Natural killer cell (primary cell): ENCODE measurements at regions of chr19 and their contacts with region 1.

Region 1: DNA sequence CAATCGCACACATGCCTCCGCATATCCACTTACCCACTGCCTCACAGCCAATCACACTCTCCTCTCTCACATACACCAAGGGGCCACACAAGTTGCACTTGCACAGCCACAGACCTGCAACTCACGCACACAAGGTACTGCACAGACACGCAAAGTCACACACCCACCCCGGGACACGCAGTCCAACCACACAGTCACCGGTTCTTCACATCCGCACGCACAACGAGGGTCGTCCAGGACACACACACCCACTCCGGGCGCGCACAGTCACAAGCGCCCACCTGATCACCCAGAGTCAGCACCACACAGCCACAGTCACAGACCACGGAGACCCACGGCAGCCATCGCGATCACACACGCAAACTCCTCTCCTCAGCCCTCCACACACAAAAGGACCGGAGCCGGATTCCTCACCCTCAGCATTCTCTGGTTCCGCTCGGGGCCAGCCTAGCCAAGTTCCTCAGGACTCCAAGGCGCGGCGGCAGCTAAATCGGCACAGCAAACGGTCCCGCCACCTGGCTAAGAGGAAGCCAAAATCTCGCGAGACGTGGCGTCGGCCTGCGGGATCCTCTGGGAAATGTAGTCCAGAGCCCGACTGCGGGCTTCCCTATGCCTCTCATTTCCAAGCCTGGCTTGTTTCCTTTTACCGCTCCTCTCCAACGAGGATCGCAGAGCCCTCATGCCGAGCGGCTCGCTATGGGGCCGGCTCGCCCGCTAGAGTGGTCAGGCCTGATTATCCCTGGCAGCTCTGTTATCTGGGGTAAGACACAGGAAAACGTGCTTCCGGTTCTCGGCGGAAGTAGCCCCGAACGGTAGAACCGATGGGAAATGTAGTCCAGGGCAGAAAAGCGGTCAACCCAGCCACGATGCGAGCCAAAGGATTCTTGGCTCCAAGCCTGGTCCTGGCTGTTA is at the start of gene ZNF850:
- DNase-seq: peak; percentile 91 to 97
- ATAC-seq: peak; percentile 90 to 93 (median 91)
- H3K4me3 ChIP-seq: peak within 1 kb of the TSS; percentile 67
- H3K4me3 Mint-ChIP-seq: peak within 1 kb of the TSS; percentile 100
- H3K27ac ChIP-seq: peak within 1 kb of the TSS; percentile 56
- H3K27ac Mint-ChIP-seq: peak within 1 kb of the TSS; percentile 95 to 97
- H3K4me1 ChIP-seq: peaks cover 19% of the 10 kb centered on the region
- H3K4me1 Mint-ChIP-seq: peaks cover 26 to 27% of the 10 kb centered on the region in 2 donors
- H3K27me3 ChIP-seq: no peaks in the 10 kb centered on the region
- H3K27me3 Mint-ChIP-seq: no peaks in the 10 kb centered on the region
- CTCF ChIP-seq: no peak
- total RNA-seq, gene ZNF850: 1.7 to 4.3 (median 4.2) TPM

Region 2: DNA sequence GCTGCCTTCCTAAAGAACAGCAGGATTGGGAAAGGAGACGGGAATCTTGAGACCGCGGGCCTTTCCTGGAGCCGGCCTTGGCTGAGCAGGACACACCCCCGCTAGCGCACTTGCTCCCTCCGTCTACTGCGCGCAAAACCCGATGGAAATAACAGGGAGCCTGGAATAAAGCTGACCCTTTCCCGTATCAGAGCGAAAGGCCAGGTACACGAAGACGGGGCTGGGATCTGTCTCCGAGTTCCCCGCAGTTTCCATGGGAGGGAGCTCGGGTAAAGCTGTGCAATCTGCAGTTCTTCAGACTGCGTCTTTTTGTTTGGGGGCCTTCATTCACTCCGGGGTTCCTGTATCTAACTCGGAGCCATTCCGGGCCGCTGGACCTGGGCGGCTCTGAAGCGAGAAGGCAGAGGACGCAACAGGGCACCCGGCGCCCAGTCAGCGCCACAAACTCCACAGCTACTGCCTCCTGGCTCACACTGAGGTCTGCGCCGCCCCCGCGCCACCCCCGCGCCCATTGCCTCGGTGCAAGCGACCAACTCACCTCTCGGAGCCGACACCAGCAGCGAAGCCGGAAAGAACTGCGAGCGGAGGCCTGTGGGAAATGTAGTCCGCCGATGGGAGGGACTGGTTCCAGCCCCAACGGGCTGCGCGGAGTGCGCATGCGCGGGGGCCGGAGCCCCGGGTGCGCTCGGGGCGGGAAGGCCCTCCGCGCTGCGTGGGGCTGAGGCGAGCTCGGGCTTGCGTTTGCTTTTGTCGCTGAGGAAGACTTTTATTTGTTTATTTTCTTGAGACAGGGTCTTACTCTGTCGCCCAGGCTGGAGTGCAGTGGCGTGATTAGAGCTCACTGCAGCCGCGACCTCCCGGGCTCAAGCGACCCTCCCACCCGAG is 393.7 kb before region 1 on chr19 and contains the start of gene ZFP14:
- intact Hi-C with region 1: loop called (anchors 2 kb)
- DNase-seq: peak; percentile 91 to 97
- ATAC-seq: peak; percentile 98
- H3K4me3 ChIP-seq: peak within 1 kb of the TSS; percentile 81
- H3K4me3 Mint-ChIP-seq: peak within 1 kb of the TSS; percentile 88
- H3K27ac ChIP-seq: peak within 1 kb of the TSS; percentile 89
- H3K27ac Mint-ChIP-seq: peak within 1 kb of the TSS; percentile 89 to 98
- H3K4me1 ChIP-seq: peaks cover 10% of the 10 kb centered on the region
- H3K4me1 Mint-ChIP-seq: peaks cover 18 to 23% of the 10 kb centered on the region in 2 donors
- H3K27me3 ChIP-seq: no peaks in the 10 kb centered on the region
- H3K27me3 Mint-ChIP-seq: no peaks in the 10 kb centered on the region
- CTCF ChIP-seq: no peak
- total RNA-seq, gene ZFP14: 7.4 to 8.2 (median 7.8) TPM

Region 3: DNA sequence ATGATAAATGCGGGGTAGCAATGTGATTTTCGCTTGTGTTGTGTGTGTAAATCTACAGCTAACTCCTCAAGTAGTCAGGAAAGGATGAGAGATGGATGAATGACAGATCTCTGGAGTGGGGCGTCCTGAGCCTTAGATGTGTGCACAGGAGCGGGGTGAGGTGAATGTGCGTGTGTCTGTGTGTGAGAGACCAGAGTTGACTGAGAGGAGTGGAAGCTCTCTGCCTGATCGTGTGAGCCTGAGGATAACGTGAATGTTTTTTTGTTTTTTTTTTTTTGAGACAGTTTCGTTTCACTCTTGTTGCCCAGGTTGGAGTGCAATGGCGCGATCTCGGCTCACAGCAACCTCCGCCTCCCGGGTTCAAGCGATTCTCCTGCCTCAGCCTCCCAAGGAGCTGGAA is 106.7 kb before region 1 on chr19:
- intact Hi-C with region 1: loop called (anchors 2 kb)
- DNase-seq: peak in 1 of 2 donors; percentile 10
- ATAC-seq: no peak
- H3K4me3 ChIP-seq: peak overlapping the region; percentile 80
- H3K4me3 Mint-ChIP-seq: peak overlapping the region; percentile 100
- H3K27ac ChIP-seq: no peak overlapping the region
- H3K27ac Mint-ChIP-seq: peak overlapping the region; percentile 98
- H3K4me1 ChIP-seq: peaks cover 20% of the 10 kb centered on the region
- H3K4me1 Mint-ChIP-seq: peaks cover 34 to 40% of the 10 kb centered on the region in 2 donors
- H3K27me3 ChIP-seq: no peaks in the 10 kb centered on the region
- H3K27me3 Mint-ChIP-seq: no peaks in the 10 kb centered on the region
- CTCF ChIP-seq: no peak

Region 4: DNA sequence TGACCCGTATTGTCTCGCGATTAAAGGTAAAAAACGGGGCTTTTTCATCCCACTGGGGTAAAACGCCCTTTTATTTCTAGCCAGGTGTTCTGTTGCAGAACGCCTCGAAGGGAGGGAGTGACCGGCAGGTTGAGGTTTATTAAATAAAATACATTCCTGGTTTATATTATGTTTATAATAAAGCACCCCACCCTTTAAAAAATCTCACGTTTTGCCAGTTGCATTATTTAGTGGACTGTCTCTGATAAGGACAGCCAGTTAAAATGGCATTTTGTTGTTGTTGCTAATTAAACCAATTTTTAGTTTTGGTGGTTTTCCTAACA is 25.2 kb after region 1 on chr19:
- intact Hi-C with region 1: loop called (anchors 1 kb)
- DNase-seq: no peak
- ATAC-seq: no peak
- H3K4me3 ChIP-seq: peak overlapping the region; percentile 96
- H3K4me3 Mint-ChIP-seq: peak overlapping the region; percentile 99
- H3K27ac ChIP-seq: peak overlapping the region; percentile 90
- H3K27ac Mint-ChIP-seq: peak overlapping the region; percentile 95 to 99
- H3K4me1 ChIP-seq: peaks cover 17% of the 10 kb centered on the region
- H3K4me1 Mint-ChIP-seq: peaks cover 3 to 7% of the 10 kb centered on the region in 2 donors
- H3K27me3 ChIP-seq: no peaks in the 10 kb centered on the region
- H3K27me3 Mint-ChIP-seq: no peaks in the 10 kb centered on the region
- CTCF ChIP-seq: no peak

Region 5: DNA sequence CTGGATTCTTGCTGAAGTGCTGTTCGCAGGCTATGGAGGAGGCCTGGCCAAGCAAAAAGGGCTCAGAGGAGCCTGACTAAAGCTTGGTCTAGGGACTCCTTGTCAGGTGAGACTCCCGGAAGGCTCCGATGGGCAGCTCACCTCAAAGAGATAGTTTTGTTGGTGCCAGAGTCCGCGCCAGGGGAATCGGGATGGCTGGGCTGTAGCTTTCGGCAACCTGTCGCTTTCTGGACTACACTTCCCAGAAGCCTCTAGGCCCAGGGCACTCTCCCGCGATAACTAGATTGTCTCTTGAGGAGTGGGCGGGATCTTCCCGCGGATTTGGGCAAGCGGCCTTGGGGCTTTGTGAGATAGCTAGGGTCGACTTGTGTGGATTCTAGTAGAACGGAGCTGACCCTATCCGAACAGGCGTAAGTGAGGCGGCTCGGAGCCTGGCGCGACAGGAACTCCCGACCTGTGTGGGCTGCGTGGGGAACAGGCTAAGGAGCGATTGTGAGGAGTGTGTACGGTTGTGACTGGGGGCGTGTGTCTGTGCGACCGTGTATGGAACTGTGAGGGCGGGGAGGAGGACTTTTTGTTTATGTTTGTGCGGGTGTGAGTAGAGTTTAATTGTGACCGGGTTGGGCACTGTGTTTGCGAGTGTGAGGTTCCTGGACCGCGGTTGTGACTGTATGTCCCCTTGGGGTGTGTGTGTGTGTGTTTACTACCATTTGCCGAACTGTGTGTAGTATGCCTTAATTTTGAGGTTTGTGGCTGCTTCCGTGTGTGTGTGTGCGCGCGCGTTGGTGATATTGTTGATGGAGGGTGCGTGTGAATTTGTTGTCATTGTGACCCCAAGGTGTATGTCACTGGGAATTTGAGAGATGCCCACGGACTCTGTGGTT is 78.2 kb after region 1 on chr19 and contains the start of gene ZNF345:
- intact Hi-C with region 1: loop called (anchors 1 kb)
- DNase-seq: peak; percentile 73 to 94
- ATAC-seq: peak; percentile 79 to 94 (median 85)
- H3K4me3 ChIP-seq: peak within 1 kb of the TSS; percentile 62
- H3K4me3 Mint-ChIP-seq: no peak within 1 kb of the TSS
- H3K27ac ChIP-seq: peak within 1 kb of the TSS; percentile 85
- H3K27ac Mint-ChIP-seq: no peak within 1 kb of the TSS
- H3K4me1 ChIP-seq: peaks cover 23% of the 10 kb centered on the region
- H3K4me1 Mint-ChIP-seq: peaks cover 0 to 10% of the 10 kb centered on the region in 2 donors
- H3K27me3 ChIP-seq: no peaks in the 10 kb centered on the region
- H3K27me3 Mint-ChIP-seq: no peaks in the 10 kb centered on the region
- CTCF ChIP-seq: no peak
- total RNA-seq, gene ZNF345: 7.1 to 19.5 (median 10.0) TPM

Region 6: DNA sequence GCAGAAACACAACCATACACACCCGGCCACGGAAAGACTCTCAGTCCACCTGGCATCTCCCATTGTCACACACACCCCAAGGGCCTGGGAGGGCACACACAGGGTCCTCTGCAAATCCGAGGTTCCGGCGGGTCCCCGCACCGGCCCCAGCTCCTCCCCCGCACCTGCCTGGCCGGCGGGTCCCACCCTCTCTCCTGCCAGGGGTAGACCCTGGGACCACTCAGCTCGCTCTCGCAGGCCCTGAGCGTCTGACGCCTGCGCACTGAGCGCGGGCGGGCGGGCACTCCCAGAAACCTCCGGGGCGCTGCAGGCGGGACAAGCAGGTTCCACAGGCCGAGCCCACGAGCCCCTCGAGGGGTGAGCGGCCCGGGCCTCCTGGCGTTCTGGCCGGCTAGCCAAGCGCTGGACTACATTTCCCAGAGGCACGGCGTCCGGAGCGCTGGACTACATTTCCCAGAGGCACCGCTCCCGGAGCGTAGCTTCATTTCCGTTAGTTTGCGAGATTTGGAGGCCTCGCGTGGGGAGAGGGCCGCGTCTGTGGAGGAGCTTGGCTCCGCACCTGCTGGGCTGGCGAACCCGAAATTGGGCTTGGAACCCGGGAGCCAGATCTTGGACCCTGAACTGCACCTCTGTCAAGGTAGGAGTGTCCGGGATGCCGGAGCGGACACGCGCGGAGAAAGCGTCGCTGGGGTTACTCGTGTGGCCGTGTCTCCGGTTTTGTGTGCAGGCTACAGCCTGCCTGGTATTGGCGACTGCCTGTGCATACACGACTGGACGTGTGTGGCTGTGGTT is 305.6 kb after region 1 on chr19 and contains the start of gene ZNF420:
- intact Hi-C with region 1: loop called (anchors 2 kb)
- DNase-seq: peak; percentile 82 to 94
- ATAC-seq: peak; percentile 90 to 96 (median 93)
- H3K4me3 ChIP-seq: peak within 1 kb of the TSS; percentile 83
- H3K4me3 Mint-ChIP-seq: peak within 1 kb of the TSS; percentile 100
- H3K27ac ChIP-seq: peak within 1 kb of the TSS; percentile 77
- H3K27ac Mint-ChIP-seq: peak within 1 kb of the TSS; percentile 96 to 97
- H3K4me1 ChIP-seq: peaks cover 8% of the 10 kb centered on the region
- H3K4me1 Mint-ChIP-seq: peaks cover 32 to 37% of the 10 kb centered on the region in 2 donors
- H3K27me3 ChIP-seq: no peaks in the 10 kb centered on the region
- H3K27me3 Mint-ChIP-seq: no peaks in the 10 kb centered on the region
- CTCF ChIP-seq: no peak
- total RNA-seq, gene ZNF420: 6.4 to 15.6 (median 10.2) TPM